ENCODE measurements at regions of chr11 and their contacts with region 1.

Region 1: DNA sequence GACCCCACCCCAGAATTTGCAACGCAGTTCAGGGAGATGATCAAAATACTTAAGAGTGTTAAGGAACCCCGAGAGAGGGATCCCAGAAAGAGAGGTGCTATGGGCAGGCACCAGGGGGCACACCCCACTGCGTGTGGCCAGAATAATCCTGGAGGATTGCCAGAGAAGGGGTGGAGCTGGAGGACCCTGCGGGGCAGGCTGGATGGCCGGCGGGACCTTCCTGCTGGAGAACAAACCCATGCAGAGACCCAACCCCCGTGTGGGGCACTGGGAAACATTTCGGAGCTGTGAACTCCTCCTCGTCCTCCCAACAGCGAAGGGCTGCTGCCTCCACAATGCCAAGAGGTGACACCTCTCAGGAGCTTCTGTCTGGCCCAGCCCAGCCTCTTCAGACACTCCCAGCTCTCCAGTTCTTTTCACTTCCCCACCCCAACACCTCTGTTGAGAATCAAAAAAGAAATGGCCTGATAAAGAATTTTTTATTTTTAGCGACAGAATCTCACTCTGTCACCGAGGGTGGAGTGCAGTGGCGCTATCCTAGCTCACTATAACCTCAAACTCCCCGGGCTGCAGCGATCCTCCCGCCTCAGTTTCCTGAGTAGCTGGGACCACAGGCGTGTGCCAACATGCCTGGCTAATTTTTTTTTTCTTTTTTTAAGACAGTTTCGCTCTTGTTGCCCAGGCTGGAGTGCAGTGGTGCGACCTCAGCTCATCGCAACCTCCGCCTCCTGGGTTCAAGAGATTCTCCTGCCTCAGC is 25.6 kb downstream of the RHOD start:
- DNase-seq: peak; percentile 41 to 81 (median 67)
- ATAC-seq: peak; percentile 56 to 64
- H3K4me3 ChIP-seq: peak overlapping the region; percentile 7
- H3K27ac ChIP-seq: peak overlapping the region; percentile 34
- H3K4me1 ChIP-seq: peaks cover 5% of the 10 kb centered on the region
- H3K27me3 ChIP-seq: no peaks in the 10 kb centered on the region

Region 2: DNA sequence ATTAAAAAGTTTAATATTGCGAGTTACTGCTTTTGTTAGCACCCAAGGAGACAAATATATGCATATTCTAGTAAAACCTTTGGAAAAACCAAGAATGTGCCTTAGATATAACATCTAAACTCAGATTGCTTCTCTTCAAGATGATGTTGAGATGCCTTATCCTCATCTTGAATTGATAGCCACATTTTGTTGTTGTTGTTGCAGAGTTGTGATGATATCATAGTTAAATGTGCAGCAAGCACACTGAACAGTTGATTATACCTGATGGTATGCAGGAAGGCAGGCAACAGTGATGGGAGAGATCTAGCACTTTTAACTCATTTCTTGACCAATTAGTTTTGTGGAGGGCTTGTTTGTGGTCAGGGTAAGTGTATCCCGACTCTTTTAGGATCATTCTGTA is 84.9 kb after region 1 on chr11:
- intact Hi-C with region 1: loop called in 3 of 4 experiments (anchors 2 to 5 kb)
- DNase-seq: no peak
- ATAC-seq: no peak
- H3K4me3 ChIP-seq: no peak overlapping the region
- H3K27ac ChIP-seq: no peak overlapping the region
- H3K4me1 ChIP-seq: peaks cover 3% of the 10 kb centered on the region
- H3K27me3 ChIP-seq: no peaks in the 10 kb centered on the region

Measured in right cardiac atrium (tissue), 5 donors.